Activated CD8-positive, alpha-beta T cell treated with anti-CD3 and anti-CD28 coated beads, Interleukin-2, amount 10 ng/mL, durations not matched to agents 7 days and 5 days (primary cell): ENCODE measurements at regions of chr13 and their contacts with region 1.

Region 1: GRCh38 chr13:99916366-99917103 is 55.0 kb downstream of the ZIC5 start:
- DNase-seq: peak; percentile 42
- ATAC-seq: peak; percentile 69
- H3K4me3 Mint-ChIP-seq: no peak overlapping the region
- H3K27ac Mint-ChIP-seq: no peak overlapping the region
- H3K4me1 Mint-ChIP-seq: peaks cover 26% of the 10 kb centered on the region
- H3K27me3 Mint-ChIP-seq: peaks cover 24% of the 10 kb centered on the region

Region 2: DNA sequence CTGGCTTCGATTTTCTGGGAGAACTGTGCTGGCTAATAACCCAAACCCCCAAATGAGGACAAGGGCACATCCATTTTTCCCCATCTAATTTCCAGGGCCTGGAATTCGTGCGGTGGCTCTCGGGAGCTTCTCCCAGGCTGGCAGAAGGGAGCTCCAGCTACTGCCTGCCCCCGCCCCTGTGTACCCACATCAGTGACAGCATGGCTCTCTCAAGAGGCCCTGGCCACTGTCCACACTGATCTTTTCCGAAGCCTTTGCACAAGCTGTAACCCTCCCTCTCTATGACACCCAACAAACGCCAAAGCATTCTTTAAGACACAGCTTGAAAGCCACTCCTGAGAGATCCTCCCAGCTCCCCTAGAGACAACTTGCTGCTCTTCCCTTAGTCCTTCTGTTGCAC is 18.1 kb before region 1 on chr13:
- CTCF ChIA-PET with region 1: interaction called, 33 read pairs
- POLR2A ChIA-PET with region 1: no interaction called
- DNase-seq: no peak
- ATAC-seq: no peak
- H3K4me3 Mint-ChIP-seq: no peak overlapping the region
- H3K27ac Mint-ChIP-seq: no peak overlapping the region
- H3K4me1 Mint-ChIP-seq: peaks cover 18% of the 10 kb centered on the region
- H3K27me3 Mint-ChIP-seq: peaks cover 68% of the 10 kb centered on the region

Region 3: DNA sequence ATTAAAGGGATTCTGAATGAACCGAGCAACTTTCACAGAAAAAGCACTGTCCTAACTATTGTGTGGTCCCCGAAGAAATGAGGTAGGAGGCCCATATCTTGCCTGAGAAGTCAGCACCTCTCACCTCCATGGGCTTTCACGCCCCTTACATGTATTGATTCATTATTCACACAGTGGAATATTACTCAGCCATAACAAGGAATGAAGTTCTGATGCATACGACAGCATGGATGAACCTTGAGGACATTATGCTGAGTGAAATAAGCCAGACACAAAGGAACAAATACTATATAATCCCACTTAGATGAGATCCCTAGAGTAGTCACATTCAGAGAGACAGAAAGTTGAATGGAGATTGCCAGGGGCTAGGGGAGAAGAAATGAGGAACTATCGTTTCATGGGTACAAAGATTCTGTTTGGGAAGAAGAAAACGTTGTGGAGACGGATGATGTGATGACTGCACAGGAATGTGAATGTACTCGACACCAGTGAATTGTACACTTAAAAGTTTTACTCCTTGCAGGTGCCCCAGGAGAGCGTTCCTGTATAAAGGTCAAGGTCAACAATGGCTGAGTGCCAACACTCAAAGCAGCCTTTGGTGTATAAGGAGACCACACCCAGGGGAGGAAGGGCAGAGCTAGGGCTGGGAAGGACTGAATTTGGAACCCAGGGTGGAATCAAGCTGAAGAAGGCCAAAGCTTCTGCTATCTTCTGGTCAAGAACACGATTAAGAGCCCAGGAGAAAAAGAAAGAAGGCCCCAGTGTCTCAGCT is 32.6 kb after region 1 on chr13:
- CTCF ChIA-PET with region 1: no interaction called
- POLR2A ChIA-PET with region 1: no interaction called
- DNase-seq: no peak
- ATAC-seq: no peak
- H3K4me3 Mint-ChIP-seq: no peak overlapping the region
- H3K27ac Mint-ChIP-seq: no peak overlapping the region
- H3K4me1 Mint-ChIP-seq: no peaks in the 10 kb centered on the region
- H3K27me3 Mint-ChIP-seq: peaks cover 61% of the 10 kb centered on the region